B cell (primary cell): ENCODE measurements at regions of chr5 and their contacts with region 1.

Region 1: GRCh38 chr5:149731639-149732323 is 1.7 kb downstream of the PPARGC1B start:
- DNase-seq: peak; percentile 87
- ATAC-seq: peak; percentile 60
- H3K4me3 ChIP-seq: peak overlapping the region; percentile 13 to 86 (median 80)
- H3K4me3 Mint-ChIP-seq: peak overlapping the region; percentile 90
- H3K27ac ChIP-seq: peak overlapping the region in 1 of 2 donors; percentile 64
- H3K27ac Mint-ChIP-seq: peak overlapping the region; percentile 82
- H3K4me1 ChIP-seq: peaks cover 5 to 8% of the 10 kb centered on the region in 2 donors
- H3K4me1 Mint-ChIP-seq: peaks cover 6% of the 10 kb centered on the region
- H3K27me3 ChIP-seq: no peaks in the 10 kb centered on the region
- H3K27me3 Mint-ChIP-seq: no peaks in the 10 kb centered on the region
- CTCF ChIP-seq: no peak

Region 2: DNA sequence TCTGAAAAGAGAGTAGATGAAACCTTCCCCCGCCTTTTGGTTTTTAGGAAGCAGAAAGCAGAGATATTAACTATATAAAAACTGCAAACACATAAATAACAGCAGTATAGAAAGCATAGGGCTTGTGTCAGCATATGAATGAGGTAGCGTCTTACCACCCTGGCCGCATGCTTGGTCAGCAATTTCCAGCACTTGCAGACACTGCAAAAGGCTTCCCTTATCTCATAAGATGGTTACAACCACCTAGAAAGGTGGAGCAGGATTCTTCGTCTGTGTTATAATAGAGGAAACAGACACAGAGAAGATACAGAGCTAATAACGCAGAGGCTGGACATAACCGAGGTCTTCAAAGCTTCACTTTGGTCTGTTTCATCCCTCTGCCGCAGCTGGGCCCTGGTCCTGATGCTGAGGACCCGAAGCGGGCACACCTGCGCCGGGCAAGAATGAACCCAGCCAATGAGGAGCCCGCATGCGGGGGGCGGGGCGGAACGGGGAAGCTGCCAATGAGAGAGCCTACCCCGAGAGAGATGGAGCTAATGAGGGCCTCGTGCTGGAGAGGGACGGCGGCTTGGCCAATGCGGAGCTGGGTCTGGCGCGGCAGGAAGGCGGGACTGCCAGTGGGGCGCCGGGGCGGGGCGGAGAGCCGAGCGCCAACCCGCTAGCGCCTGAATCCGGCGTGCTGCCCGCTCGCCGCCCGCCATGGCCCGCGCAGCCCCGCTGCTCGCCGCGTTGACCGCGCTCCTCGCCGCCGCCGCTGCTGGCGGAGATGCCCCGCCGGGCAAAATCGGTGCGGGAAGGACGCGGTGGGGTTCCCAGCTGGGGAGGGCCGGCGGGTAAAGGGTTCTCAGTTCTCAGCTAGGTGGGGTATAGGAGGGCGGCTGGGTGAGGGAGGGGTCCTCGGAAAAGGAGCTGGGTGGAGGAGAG is 374.1 kb before region 1 on chr5 and contains the start of gene PCYOX1L:
- CTCF ChIA-PET with region 1: no interaction called
- POLR2A ChIA-PET with region 1: no interaction called
- intact Hi-C with region 1: loop called (anchors 5 kb)
- DNase-seq: peak; percentile 95
- ATAC-seq: peak; percentile 99
- H3K4me3 ChIP-seq: peak within 1 kb of the TSS; percentile 38 to 82 (median 76)
- H3K4me3 Mint-ChIP-seq: peak within 1 kb of the TSS; percentile 95
- H3K27ac ChIP-seq: peak within 1 kb of the TSS; percentile 38 to 69
- H3K27ac Mint-ChIP-seq: peak within 1 kb of the TSS; percentile 85
- H3K4me1 ChIP-seq: peaks cover 12 to 15% of the 10 kb centered on the region in 2 donors
- H3K4me1 Mint-ChIP-seq: peaks cover 18% of the 10 kb centered on the region
- H3K27me3 ChIP-seq: no peaks in the 10 kb centered on the region
- H3K27me3 Mint-ChIP-seq: no peaks in the 10 kb centered on the region
- CTCF ChIP-seq: no peak
- total RNA-seq, gene PCYOX1L: 11.7 and 13.5 TPM in 2 replicates

Region 3: DNA sequence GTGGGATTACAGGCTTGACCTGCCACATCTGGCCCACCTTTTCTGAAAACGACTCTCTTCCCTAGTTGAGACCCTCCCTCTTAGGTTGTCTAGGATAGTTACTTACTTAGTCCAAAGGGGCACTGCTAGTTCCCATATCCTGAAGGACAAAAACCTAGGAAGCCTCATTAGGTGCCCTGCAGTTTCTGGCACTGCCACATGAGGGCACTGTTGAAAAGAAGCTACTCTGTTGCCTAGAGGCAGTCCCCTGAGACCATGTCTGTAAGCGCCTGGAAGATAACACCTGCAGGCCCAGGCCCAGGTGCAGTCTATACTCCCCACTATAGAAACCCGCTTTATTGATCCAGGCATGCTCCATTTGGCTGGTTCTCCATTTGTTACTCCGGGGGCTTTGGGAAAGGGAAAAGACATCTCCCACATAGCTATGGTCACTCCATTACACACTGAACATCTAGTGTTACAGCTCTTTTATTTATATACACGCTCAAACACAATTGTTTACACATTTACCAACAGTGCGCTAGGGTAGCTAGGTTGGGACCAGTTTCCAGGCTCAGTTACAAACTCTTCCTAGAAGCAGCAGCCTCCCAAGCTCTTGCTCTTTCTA is 75.1 kb before region 1 on chr5:
- CTCF ChIA-PET with region 1: no interaction called
- POLR2A ChIA-PET with region 1: interaction called, 16 read pairs
- intact Hi-C with region 1: no loop called
- DNase-seq: peak; percentile 52
- ATAC-seq: peak; percentile 54
- H3K4me3 ChIP-seq: no peak overlapping the region
- H3K4me3 Mint-ChIP-seq: no peak overlapping the region
- H3K27ac ChIP-seq: no peak overlapping the region
- H3K27ac Mint-ChIP-seq: no peak overlapping the region
- H3K4me1 ChIP-seq: no peaks in the 10 kb centered on the region
- H3K4me1 Mint-ChIP-seq: no peaks in the 10 kb centered on the region
- H3K27me3 ChIP-seq: peaks cover 0 to 3% (median 1%) of the 10 kb centered on the region in 4 experiments
- H3K27me3 Mint-ChIP-seq: peaks cover 32% of the 10 kb centered on the region
- CTCF ChIP-seq: peak; percentile 56

Region 4: GRCh38 chr5:149680810-149681221 is 51.0 kb before region 1 on chr5:
- CTCF ChIA-PET with region 1: interaction called, 5 read pairs
- POLR2A ChIA-PET with region 1: interaction called, 4 read pairs
- intact Hi-C with region 1: loop called (anchors 1 kb)
- DNase-seq: peak; percentile 88
- ATAC-seq: peak; percentile 96
- H3K4me3 ChIP-seq: no peak overlapping the region
- H3K4me3 Mint-ChIP-seq: peak overlapping the region; percentile 53
- H3K27ac ChIP-seq: peak overlapping the region; percentile 49 to 56
- H3K27ac Mint-ChIP-seq: peak overlapping the region; percentile 80
- H3K4me1 ChIP-seq: peaks cover 38 to 43% of the 10 kb centered on the region in 2 donors
- H3K4me1 Mint-ChIP-seq: peaks cover 53% of the 10 kb centered on the region
- H3K27me3 ChIP-seq: peaks cover 0 to 4% (median 0%) of the 10 kb centered on the region in 4 experiments
- H3K27me3 Mint-ChIP-seq: no peaks in the 10 kb centered on the region
- CTCF ChIP-seq: no peak

Region 5: GRCh38 chr5:149828161-149828884 is 96.5 kb after region 1 on chr5:
- CTCF ChIA-PET with region 1: interaction called, 9 read pairs
- POLR2A ChIA-PET with region 1: no interaction called
- intact Hi-C with region 1: loop called (anchors 2 kb)
- DNase-seq: peak; percentile 85
- ATAC-seq: peak; percentile 59
- H3K4me3 ChIP-seq: no peak overlapping the region
- H3K4me3 Mint-ChIP-seq: no peak overlapping the region
- H3K27ac ChIP-seq: no peak overlapping the region
- H3K27ac Mint-ChIP-seq: no peak overlapping the region
- H3K4me1 ChIP-seq: no peaks in the 10 kb centered on the region
- H3K4me1 Mint-ChIP-seq: peaks cover 6% of the 10 kb centered on the region
- H3K27me3 ChIP-seq: no peaks in the 10 kb centered on the region
- H3K27me3 Mint-ChIP-seq: no peaks in the 10 kb centered on the region
- CTCF ChIP-seq: peak; percentile 92

Region 6: GRCh38 chr5:149895416-149896345 is 163.9 kb after region 1 on chr5:
- CTCF ChIA-PET with region 1: no interaction called
- POLR2A ChIA-PET with region 1: no interaction called
- intact Hi-C with region 1: no loop called
- DNase-seq: no peak
- ATAC-seq: no peak
- H3K4me3 ChIP-seq: no peak overlapping the region
- H3K4me3 Mint-ChIP-seq: no peak overlapping the region
- H3K27ac ChIP-seq: no peak overlapping the region
- H3K27ac Mint-ChIP-seq: no peak overlapping the region
- H3K4me1 ChIP-seq: no peaks in the 10 kb centered on the region
- H3K4me1 Mint-ChIP-seq: no peaks in the 10 kb centered on the region
- H3K27me3 ChIP-seq: peaks cover 0 to 3% (median 0%) of the 10 kb centered on the region in 4 experiments
- H3K27me3 Mint-ChIP-seq: peaks cover 6% of the 10 kb centered on the region
- CTCF ChIP-seq: no peak

Region 7: DNA sequence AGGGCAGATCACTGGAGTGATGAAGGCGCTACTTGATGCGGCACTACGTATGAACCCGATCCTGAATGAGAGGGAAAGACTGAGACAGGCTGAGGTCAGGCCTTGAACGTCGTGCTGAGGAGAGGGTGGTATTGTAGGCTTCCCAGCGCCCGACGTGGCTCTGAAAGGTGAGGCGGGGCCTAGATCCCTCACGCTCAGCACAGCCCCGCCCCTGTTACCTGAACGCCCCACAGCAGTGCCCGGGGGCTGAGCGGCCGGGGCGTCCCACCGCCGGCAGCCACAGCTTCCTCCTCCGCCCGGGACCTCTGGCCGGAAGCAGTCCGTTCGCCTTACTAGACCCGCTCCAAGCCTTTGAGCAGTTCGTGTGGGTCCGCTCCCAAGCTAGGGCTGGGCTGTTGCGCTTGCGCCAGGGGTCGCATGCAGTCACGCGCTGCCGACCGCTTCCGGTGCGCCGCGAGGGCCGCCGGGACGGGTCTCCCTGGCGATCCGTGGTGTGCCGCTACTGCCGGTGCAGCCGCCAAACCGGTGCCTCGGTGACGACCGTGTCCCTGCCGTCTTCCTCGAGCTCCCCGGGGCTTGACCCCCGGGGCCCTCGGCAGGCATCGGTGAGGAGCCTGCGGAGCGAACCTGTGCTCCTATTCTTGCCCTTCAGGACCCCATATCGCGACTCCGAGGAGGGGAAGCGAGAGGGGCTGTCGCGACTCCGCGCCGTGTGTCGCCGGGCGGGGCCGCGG is 268.6 kb after region 1 on chr5 and contains the starts of genes HMGXB3 and TIGD6:
- CTCF ChIA-PET with region 1: no interaction called
- POLR2A ChIA-PET with region 1: interaction called, 3 read pairs
- intact Hi-C with region 1: loop called (anchors 2 kb)
- DNase-seq: peak; percentile 94
- ATAC-seq: peak; percentile 85
- H3K4me3 ChIP-seq: peak within 1 kb of the TSS; percentile 48 to 90 (median 83)
- H3K4me3 Mint-ChIP-seq: peak within 1 kb of the TSS; percentile 89
- H3K27ac ChIP-seq: peak within 1 kb of the TSS; percentile 83 to 87
- H3K27ac Mint-ChIP-seq: peak within 1 kb of the TSS; percentile 96
- H3K4me1 ChIP-seq: peaks cover 21 to 23% of the 10 kb centered on the region in 2 donors
- H3K4me1 Mint-ChIP-seq: peaks cover 37% of the 10 kb centered on the region
- H3K27me3 ChIP-seq: no peaks in the 10 kb centered on the region
- H3K27me3 Mint-ChIP-seq: no peaks in the 10 kb centered on the region
- CTCF ChIP-seq: no peak
- total RNA-seq, gene HMGXB3: 35.7 and 40.7 TPM in 2 replicates
- total RNA-seq, gene TIGD6: 5.4 and 5.9 TPM in 2 replicates